ENCODE measurements at regions of chr4 and their contacts with region 1.

Region 1: DNA sequence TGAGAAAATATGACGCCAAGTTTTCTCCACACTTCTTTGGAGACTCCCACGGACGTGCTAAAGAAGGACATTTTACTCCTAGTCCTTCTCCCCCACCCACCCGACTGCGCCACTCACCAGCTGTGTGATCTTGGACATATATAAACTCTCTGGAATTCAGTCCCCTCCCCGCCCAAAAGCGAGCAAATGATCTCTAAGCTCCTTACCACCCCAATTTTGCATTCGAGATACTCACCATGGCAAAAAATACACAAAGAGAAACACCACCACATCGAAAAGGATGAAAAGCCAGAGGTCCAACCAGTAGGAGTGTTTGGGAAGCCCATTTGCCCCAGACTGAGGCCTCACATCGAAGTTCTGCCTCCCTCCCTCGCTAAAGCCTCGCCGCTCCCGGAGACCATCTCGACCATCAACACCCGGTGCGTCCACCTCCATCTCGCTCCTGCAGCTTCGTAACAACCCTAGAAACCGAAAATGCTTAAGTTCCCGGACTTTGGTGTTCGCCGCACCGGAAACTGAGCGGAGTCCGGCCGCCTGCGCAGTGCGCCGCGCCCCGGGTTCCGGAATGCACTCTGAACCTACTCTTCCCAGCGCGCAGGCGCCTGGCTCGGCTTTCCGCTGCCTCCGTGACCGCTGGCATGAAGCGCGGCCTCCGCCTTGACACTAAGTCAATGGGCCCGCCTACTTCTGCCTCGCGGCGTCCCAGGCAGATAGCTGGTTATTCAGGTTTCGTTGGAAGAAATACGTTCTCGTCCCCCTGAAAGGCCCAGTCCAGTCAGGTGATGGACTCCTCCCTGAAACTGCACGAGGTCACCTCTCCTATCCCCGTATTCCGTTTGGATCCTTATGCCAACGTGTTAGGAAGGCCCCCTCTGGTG is 21.6 kb downstream of the FABP2 start:
- DNase-seq: peak; percentile 88 to 94
- H3K4me3 ChIP-seq: peak overlapping the region; percentile 70
- H3K4me1 ChIP-seq: peaks cover 11% of the 10 kb centered on the region
- H3K27me3 ChIP-seq: no peaks in the 10 kb centered on the region

Region 2: GRCh38 chr4:118981839-118982381 is 318.4 kb before region 1 on chr4:
- in situ Hi-C with region 1: loop called (anchors 10 kb)
- DNase-seq: peak; percentile 75 to 78
- H3K4me3 ChIP-seq: no peak overlapping the region
- H3K4me1 ChIP-seq: no peaks in the 10 kb centered on the region
- H3K27me3 ChIP-seq: no peaks in the 10 kb centered on the region

Region 3: DNA sequence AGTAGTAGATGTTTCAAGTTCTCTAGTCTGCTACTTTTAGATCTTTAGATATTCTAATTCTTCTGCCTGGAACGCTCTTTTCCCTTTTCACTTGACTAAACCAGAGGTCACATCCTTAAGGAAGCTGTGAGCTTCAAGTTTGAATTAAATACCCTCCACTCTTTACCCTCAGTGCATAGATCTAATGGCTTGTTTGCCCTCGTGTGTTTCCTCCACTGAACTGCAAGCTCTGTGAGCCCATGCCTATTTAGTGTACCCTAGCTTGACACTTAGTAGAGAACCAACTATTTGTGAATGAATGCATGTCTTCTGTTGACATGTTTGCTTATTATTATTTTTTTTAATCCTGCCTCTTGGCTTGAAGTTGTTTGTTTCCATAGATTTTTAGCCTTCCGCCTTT is 190.0 kb after region 1 on chr4:
- in situ Hi-C with region 1: loop called (anchors 25 kb)
- DNase-seq: peak; percentile 30 to 34
- H3K4me3 ChIP-seq: no peak overlapping the region
- H3K4me1 ChIP-seq: no peaks in the 10 kb centered on the region
- H3K27me3 ChIP-seq: no peaks in the 10 kb centered on the region

Region 4: GRCh38 chr4:119678761-119679160 is 378.4 kb after region 1 on chr4:
- in situ Hi-C with region 1: no loop called
- DNase-seq: no peak
- H3K4me3 ChIP-seq: no peak overlapping the region
- H3K4me1 ChIP-seq: peaks cover 10% of the 10 kb centered on the region
- H3K27me3 ChIP-seq: no peaks in the 10 kb centered on the region

Region 5: GRCh38 chr4:120049732-120050494 is 749.6 kb after region 1 on chr4:
- in situ Hi-C with region 1: loop called (anchors 10 kb)
- DNase-seq: peak in 1 of 2 experiments; percentile 88
- H3K4me3 ChIP-seq: no peak overlapping the region
- H3K4me1 ChIP-seq: no peaks in the 10 kb centered on the region
- H3K27me3 ChIP-seq: no peaks in the 10 kb centered on the region